Psoas muscle (tissue), 8 donors: ENCODE measurements at regions of chrX and their contacts with region 1.

Region 1: DNA sequence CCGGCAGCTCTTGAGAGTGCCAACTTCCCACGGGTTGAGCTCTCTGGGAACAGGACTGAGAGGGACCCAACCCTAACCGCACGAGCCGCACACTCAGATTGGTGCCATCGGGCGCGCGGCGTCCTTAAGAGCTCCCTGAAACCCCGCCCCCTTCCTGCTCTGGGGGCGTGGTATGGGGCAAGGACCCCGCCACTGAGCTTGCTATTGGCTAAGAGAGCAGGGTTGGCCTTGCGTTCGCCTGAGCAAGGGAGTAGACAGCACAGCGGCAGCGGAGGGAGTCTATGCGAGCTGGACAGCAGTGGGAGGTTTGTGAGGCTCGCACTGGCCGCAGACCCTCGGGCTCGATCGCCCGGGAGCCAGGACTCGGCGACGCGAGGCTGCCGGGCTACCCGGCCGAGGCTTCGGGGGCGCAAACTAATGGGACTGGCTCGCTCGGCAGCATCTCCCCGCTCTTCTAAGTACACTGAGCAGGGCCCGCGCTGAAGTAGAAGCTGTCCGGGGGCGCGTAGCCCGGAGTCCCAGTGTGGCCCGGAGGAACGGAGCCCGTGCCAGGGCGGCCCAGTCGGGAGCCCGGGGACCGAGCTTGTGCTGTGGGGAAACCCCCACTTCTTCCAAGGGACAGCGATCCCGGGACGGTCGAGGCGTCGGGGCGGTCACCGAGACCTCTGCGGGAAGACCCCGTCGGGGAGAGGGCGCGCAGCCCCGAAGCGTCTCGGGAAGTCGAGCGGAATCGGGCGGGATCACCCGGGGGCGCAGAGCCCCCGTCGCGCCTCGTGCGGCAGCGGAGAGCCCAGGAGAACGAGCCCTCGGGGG is at the start of gene EFNB1:
- DNase-seq: peak; percentile 91 to 96
- ATAC-seq: peak; percentile 90 to 93 (median 92)
- H3K4me3 ChIP-seq: peak within 1 kb of the TSS; percentile 80
- H3K27ac ChIP-seq: peak within 1 kb of the TSS; percentile 74
- H3K4me1 ChIP-seq: peaks cover 8% of the 10 kb centered on the region
- H3K27me3 ChIP-seq: peaks cover 0 to 13% (median 0%) of the 10 kb centered on the region in 3 donors
- CTCF ChIP-seq: no peak
- total RNA-seq, gene EFNB1: 10.9 to 14.9 (median 11.3) TPM

Region 2: DNA sequence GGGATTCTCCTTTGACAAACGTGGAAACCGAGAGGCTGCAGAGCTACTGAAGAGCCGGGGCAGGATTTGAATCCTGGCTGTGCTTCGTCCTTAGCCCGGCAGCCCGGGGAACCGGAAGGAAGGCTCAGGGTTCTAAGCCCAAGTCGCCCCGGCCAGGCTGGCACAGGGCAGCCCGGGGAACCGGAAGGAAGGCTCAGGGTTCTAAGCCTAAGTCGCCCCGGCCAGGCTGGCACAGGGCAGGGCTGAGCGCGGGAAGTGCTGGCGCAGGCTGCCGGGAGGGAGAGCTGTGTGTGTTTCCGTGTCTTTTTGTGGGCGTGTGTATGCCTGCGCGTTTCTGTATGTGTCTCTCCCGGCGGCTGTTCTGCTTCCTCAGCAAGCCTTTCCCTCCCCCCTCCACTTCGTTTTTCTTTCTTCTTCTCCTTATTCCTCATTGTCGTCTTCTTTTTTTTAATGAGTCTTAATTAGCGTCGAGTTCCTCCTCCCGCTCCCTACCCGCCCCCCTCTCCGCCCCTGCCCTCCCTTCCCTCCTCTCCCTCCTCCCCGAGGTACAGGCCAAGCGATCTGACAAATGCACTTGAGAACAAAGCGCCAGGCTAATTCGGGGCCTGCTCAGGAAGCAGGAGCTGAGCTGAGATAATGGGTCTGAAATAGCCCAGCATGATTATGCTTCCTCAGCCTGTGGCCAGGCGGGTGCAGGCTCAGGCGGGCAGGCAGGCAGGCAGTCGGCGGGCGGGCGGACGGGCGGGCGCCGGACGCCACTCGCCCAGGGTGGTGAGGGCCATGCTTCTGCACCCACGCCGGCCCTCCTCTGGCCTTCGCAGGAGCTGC is 65.8 kb after region 1 on chrX:
- intact Hi-C with region 1: loop called in 1 of 2 experiments (anchors 2 kb)
- DNase-seq: peak; percentile 54 to 79
- ATAC-seq: peak; percentile 82 to 91 (median 88)
- H3K4me3 ChIP-seq: peak overlapping the region; percentile 50
- H3K27ac ChIP-seq: peak overlapping the region; percentile 85
- H3K4me1 ChIP-seq: peaks cover 16% of the 10 kb centered on the region
- H3K27me3 ChIP-seq: peaks cover 0 to 4% (median 0%) of the 10 kb centered on the region in 3 donors
- CTCF ChIP-seq: no peak

Region 3: DNA sequence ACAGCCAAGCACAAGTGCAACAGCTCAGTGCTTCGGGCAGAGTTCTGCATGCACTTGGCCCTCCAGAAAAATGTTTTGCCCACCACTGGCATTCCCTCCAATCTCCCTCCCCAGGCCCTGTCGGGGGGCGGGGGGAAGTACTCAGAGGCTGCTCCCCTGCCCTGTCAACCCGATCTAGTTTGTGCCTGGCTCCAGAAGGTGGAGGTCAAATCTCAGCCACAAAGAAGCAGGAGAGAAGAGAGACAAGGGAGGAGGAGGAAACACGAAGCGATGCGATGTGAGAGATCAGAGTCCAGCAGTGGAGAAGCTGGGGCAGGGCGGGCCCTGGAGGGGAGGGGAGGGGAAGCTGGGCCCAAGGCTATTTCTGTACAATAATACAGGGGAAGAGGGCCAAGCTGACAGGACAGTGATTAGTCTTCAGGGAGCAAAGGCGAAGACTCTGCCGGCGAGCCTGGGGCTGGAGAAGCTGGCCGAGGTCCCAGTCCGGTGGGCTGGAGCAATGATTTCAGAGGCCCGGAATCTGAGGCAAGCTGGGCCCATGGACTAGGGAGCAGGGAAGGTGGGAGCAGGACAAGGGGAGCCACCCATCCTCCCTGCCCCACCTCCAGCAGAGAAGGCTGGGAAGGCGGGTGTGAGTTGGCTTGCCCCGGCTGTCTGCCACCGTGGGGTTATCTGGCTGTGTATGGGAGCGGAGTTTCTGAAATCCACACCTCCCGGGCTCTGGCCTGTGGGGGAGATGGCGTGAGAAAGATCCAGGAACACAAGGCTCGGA is 167.0 kb after region 1 on chrX:
- intact Hi-C with region 1: loop called in 1 of 2 experiments (anchors 5 kb)
- DNase-seq: peak; percentile 31 to 65
- ATAC-seq: peak; percentile 64 to 90 (median 78)
- H3K4me3 ChIP-seq: peak overlapping the region; percentile 18
- H3K27ac ChIP-seq: peak overlapping the region; percentile 16
- H3K4me1 ChIP-seq: peaks cover 5% of the 10 kb centered on the region
- H3K27me3 ChIP-seq: peaks cover 0 to 38% (median 0%) of the 10 kb centered on the region in 3 donors
- CTCF ChIP-seq: no peak

Region 4: DNA sequence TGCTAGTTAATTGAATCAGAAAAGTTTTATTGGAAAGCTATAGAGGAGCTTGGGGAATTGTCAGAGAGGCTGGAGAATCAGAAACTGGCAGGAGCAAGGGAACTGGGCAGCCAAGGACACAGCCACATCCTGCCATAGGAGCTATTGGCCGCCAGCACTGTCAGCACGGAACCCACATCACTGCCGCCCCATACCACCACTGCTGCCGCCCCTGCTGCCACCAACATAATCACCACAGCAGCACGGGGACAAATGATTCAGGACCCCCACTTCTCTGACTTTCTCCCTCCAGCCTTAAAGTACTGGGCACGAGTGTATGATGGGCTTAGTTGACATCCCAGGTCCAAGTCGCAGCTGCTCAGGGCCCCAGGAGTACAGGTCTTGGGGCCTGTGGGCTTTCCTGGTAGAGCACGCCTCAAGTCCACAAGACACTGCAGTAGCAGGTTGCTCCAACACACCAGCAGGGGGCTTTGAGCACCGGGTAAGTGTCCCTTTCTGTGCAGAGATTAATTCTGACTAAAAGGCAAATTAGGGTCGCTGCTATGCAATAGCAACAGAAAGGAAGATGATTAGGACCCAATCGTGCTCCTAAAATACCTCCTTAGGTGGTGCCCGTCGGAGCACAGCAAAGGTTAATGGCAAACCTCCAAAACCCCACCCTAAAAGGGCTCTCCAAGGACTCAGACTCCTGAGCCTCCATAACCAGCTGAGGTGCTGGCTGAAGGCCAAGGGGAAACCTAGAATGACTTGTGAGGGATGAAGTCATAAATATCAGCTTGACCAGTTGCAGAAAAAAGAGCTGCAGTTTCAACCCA is 329.4 kb after region 1 on chrX:
- intact Hi-C with region 1: loop called in 1 of 2 experiments (anchors 5 kb)
- DNase-seq: peak; percentile 57 to 73
- ATAC-seq: peak in 3 of 4 donors; percentile 43 to 71 (median 58)
- H3K4me3 ChIP-seq: no peak overlapping the region
- H3K27ac ChIP-seq: no peak overlapping the region
- H3K4me1 ChIP-seq: peaks cover 3% of the 10 kb centered on the region
- H3K27me3 ChIP-seq: peaks cover 0 to 35% (median 0%) of the 10 kb centered on the region in 3 donors
- CTCF ChIP-seq: peak; percentile 47

Region 5: GRCh38 chrX:69285881-69286564 is 457.1 kb after region 1 on chrX:
- intact Hi-C with region 1: loop called (anchors 2 kb)
- DNase-seq: peak; percentile 68 to 78
- ATAC-seq: peak; percentile 76 to 91 (median 82)
- H3K4me3 ChIP-seq: peak overlapping the region; percentile 55
- H3K27ac ChIP-seq: no peak overlapping the region
- H3K4me1 ChIP-seq: peaks cover 6% of the 10 kb centered on the region
- H3K27me3 ChIP-seq: peaks cover 0 to 32% (median 0%) of the 10 kb centered on the region in 3 donors
- CTCF ChIP-seq: peak; percentile 79